IMR-90 (cell line): ENCODE measurements at regions of chr6 and their contacts with region 1.

Region 1: DNA sequence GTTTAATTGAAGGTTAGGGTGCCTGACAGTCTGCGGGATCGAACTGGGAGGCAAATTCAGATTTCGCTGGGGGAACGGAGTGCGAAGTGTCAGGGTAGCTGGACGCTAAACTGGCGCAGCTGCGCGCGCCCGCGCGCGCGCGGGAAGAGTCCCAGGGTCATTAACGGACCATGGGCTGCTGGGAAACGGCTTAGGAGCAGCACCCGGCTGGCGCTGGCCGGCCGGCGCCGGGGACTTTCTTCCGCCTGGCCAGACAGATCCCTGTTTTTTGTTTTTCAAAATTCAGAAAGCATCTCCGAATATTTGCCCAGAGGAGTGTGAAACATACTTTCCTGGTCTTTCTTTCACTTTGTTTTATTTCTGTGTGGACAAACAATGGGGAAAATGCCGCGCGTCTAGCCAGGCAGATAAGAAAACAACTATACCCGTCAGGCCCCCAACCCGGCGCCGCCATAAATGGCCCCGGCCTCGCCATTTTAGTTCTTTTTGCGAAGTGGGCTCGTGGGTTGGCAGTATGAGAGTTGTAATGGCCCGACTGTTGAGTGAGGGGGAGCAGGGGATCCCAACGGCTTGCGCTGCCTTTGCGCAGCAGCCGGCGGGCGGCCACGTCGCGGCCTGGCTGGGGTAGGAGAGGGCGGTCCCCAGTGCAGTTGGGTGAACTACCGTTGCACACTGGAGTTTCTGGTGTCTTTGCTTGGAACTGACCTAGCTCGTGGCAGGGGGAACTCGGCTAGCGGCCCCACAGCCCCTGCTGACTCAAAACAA is 7.1 kb downstream of the HSPA1B start:
- DNase-seq: peak; percentile 84
- ATAC-seq: peak; percentile 80
- H3K4me3 ChIP-seq: peak overlapping the region; percentile 93
- H3K27ac ChIP-seq: peak overlapping the region; percentile 94
- H3K4me1 ChIP-seq: peaks cover 13% of the 10 kb centered on the region
- H3K27me3 ChIP-seq: no peaks in the 10 kb centered on the region
- CTCF ChIP-seq: no peak
- POLR2A ChIP-seq: peak; percentile 99
- RAD21 ChIP-seq: no peak

Region 2: DNA sequence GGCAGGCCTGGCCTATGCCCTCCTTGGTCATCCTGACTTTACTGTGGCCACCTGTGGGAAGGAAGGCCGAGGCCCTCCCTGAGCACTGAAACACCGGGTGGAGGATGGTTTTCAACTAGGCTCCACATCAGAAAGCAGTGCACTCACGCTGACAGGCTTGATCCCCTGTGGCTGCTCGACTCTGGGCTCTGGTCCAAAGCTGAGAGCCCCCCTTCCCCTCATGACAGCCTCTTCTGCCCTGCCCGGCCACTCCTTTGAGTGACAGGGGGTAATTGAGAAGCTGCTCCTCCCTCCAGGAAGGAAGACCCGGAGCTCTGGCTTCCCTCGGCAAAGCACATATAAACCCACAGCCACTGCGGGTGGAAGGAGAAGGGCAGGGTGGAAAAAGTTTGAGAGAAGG is 780.7 kb before region 1 on chr6:
- CTCF ChIA-PET with region 1: no interaction called
- POLR2A ChIA-PET with region 1: no interaction called
- dilution Hi-C with region 1: no loop called
- in situ Hi-C with region 1: no loop called
- intact Hi-C with region 1: no loop called
- DNase-seq: no peak
- ATAC-seq: no peak
- H3K4me3 ChIP-seq: no peak overlapping the region
- H3K27ac ChIP-seq: no peak overlapping the region
- H3K4me1 ChIP-seq: peaks cover 11% of the 10 kb centered on the region
- H3K27me3 ChIP-seq: peaks cover 9% of the 10 kb centered on the region
- CTCF ChIP-seq: no peak
- POLR2A ChIP-seq: no peak
- RAD21 ChIP-seq: no peak

Region 3: DNA sequence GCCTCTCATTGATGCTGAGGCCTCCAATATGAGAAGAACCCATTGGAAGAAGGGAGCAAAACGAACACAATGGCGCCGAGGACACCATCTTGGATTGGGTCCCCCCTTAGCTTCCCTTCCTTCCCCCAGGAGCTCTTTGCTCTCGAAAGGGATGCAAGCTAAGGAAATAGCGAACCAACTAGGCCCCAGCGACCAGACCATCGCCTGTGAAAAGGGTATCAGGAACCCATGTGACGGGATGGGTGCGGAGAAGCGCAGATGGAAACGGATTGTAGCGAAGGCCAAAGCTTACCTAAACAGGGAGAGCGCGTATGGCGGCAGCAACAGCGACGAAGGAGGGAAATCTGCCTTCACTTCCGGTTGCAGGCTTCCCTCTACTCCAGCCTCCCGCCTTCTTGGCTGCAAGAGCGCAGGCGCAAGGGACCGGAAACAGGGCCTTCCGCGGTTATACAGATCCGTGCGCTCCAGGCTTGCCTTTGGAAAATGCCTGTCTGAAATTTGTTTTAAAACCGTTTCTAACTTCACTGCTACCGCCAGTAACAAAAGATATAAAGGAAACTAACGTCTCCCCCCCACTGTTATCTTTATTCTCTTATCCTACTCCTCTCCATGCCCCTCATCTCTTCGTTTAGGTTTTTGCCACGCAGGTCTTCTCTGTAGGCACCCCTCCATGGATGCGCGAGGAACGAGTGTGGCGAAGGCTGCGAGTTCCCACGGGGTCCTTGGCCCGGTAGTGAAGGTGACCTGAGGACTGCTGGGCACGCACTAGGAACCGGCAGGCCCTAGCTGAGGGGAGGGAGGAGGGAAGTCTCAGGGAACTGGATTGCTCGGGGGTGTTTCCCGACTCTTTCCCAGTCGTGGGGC is 292.7 kb before region 1 on chr6 and contains the start of gene DDX39B:
- CTCF ChIA-PET with region 1: no interaction called
- POLR2A ChIA-PET with region 1: no interaction called
- dilution Hi-C with region 1: no loop called
- in situ Hi-C with region 1: loop called (anchors 10 kb)
- intact Hi-C with region 1: loop called (anchors 5 kb)
- DNase-seq: peak; percentile 98
- ATAC-seq: peak; percentile 83
- H3K4me3 ChIP-seq: peak within 1 kb of the TSS; percentile 72
- H3K27ac ChIP-seq: peak within 1 kb of the TSS; percentile 83
- H3K4me1 ChIP-seq: peaks cover 10% of the 10 kb centered on the region
- H3K27me3 ChIP-seq: no peaks in the 10 kb centered on the region
- CTCF ChIP-seq: no peak
- POLR2A ChIP-seq: peak; percentile 98
- RAD21 ChIP-seq: 0 out of 2 replicates have a peak, but pooled peaks have one; percentile 13
- total RNA-seq, gene DDX39B: 640 and 796 TPM in 2 replicates

Region 4: GRCh38 chr6:31665501-31666336 is 168.9 kb before region 1 on chr6 and contains the start of gene CSNK2B:
- CTCF ChIA-PET with region 1: no interaction called
- POLR2A ChIA-PET with region 1: no interaction called
- dilution Hi-C with region 1: no loop called
- in situ Hi-C with region 1: no loop called
- intact Hi-C with region 1: loop called (anchors 5 kb)
- DNase-seq: peak; percentile 96
- ATAC-seq: peak; percentile 80
- H3K4me3 ChIP-seq: peak within 1 kb of the TSS; percentile 95
- H3K27ac ChIP-seq: peak within 1 kb of the TSS; percentile 97
- H3K4me1 ChIP-seq: peaks cover 16% of the 10 kb centered on the region
- H3K27me3 ChIP-seq: no peaks in the 10 kb centered on the region
- CTCF ChIP-seq: no peak
- POLR2A ChIP-seq: peak; percentile 70
- RAD21 ChIP-seq: no peak
- total RNA-seq, gene CSNK2B: 218 and 240 TPM in 2 replicates

Region 5: GRCh38 chr6:31702819-31703522 is 131.6 kb before region 1 on chr6 and contains the start of gene ABHD16A:
- CTCF ChIA-PET with region 1: interaction called, 3 read pairs
- POLR2A ChIA-PET with region 1: no interaction called
- dilution Hi-C with region 1: no loop called
- in situ Hi-C with region 1: no loop called
- intact Hi-C with region 1: loop called (anchors 1 kb)
- DNase-seq: peak; percentile 98
- ATAC-seq: peak; percentile 94
- H3K4me3 ChIP-seq: peak within 1 kb of the TSS; percentile 67
- H3K27ac ChIP-seq: peak within 1 kb of the TSS; percentile 82
- H3K4me1 ChIP-seq: peaks cover 6% of the 10 kb centered on the region
- H3K27me3 ChIP-seq: no peaks in the 10 kb centered on the region
- CTCF ChIP-seq: no peak
- POLR2A ChIP-seq: peak; percentile 91
- RAD21 ChIP-seq: no peak
- total RNA-seq, gene ABHD16A: 30.3 and 35.1 TPM in 2 replicates

Region 6: GRCh38 chr6:31862344-31863227 is 28.0 kb after region 1 on chr6 and contains the start of gene NEU1:
- CTCF ChIA-PET with region 1: no interaction called
- POLR2A ChIA-PET with region 1: interaction called, 13 read pairs
- dilution Hi-C with region 1: no loop called
- in situ Hi-C with region 1: no loop called
- intact Hi-C with region 1: loop called (anchors 2 kb)
- DNase-seq: peak; percentile 100
- ATAC-seq: peak; percentile 96
- H3K4me3 ChIP-seq: peak within 1 kb of the TSS; percentile 72
- H3K27ac ChIP-seq: peak within 1 kb of the TSS; percentile 50
- H3K4me1 ChIP-seq: peaks cover 4% of the 10 kb centered on the region
- H3K27me3 ChIP-seq: no peaks in the 10 kb centered on the region
- CTCF ChIP-seq: no peak
- POLR2A ChIP-seq: peak; percentile 98
- RAD21 ChIP-seq: 0 out of 2 replicates have a peak, but pooled peaks have one; percentile 2
- total RNA-seq, gene NEU1: 23.6 and 28.5 TPM in 2 replicates

Region 7: DNA sequence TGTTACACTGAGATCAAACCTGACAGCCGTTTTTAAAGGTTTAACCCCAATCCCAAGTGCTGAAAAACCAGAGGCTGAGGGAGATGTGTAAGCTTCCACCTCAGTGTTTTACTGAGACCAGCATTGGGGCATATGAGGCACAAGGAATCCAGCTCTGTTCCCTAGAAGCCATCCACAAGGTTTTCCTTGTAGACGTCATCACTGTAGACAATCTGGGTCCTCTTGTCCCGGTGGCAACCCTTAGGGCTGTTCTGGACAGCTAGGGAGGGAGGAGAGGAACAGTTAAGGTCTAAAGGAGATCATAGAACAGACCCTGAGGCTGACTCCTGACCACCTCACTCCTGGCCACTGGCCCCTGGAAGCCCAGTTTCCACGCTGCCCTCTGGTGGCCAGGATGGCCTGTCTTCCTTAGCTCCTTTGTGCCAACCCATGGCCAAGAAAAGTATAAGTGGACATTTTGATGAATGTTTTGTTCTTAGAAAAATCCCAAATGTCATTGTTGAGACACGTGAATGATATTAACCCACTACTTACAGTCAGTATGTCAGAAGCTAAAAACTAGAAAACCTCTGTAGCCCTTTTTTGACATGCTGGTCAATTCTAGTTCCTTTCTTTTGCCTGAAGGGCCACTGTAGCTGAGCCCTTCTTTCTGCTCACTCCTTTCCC is 117.7 kb after region 1 on chr6:
- CTCF ChIA-PET with region 1: no interaction called
- POLR2A ChIA-PET with region 1: no interaction called
- dilution Hi-C with region 1: no loop called
- in situ Hi-C with region 1: no loop called
- intact Hi-C with region 1: loop called (anchors 5 kb)
- DNase-seq: peak; percentile 63
- ATAC-seq: peak; percentile 96
- H3K4me3 ChIP-seq: no peak overlapping the region
- H3K27ac ChIP-seq: no peak overlapping the region
- H3K4me1 ChIP-seq: peaks cover 6% of the 10 kb centered on the region
- H3K27me3 ChIP-seq: no peaks in the 10 kb centered on the region
- CTCF ChIP-seq: peak; percentile 84
- POLR2A ChIP-seq: no peak
- RAD21 ChIP-seq: peak; percentile 83